Psoas muscle (tissue), 8 donors: ENCODE measurements at regions of chr17 and their contacts with region 1.

Region 1: GRCh38 chr17:65556014-65556909 is 5.2 kb downstream of the AXIN2 start:
- DNase-seq: peak; percentile 81 to 92
- ATAC-seq: peak; percentile 51 to 64 (median 56)
- H3K4me3 ChIP-seq: no peak overlapping the region
- H3K27ac ChIP-seq: no peak overlapping the region
- H3K4me1 ChIP-seq: peaks cover 51% of the 10 kb centered on the region
- H3K27me3 ChIP-seq: no peaks in the 10 kb centered on the region
- CTCF ChIP-seq: peak; percentile 81

Region 2: DNA sequence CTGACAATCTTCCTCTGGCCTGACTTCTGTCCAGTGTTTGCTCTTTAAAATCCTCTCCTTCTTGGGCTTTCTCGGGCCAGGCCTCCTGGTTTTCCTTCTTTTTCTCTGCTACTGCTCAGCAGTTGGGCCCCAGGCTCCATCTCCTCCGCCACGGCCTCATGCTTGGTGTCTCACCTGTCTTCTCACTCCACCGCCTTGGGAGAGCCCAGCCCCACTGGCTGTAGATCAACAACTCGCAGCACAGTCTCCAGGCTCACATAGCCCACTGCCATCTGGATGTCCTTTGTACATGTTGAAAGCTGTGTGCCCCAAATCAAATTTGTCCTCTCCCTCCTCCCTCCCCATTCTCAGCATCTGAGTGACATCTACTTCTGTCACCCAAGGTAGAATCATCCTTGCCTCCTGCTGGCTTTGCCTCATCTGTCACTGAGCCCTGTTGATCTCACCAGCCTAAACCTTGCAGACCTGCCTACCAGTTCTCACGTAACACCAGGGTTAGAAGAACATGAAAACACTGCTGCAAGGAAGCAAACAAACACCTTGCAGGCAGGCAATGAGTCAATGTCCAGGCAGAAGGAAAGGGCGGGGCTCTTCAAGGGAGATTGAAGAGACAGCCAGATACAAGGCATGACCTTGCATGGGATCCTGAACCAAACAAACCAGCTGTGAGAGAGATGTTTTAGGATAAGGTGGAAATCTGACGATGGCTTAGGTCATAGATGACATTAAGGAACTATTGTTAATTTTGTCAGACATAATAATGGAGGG is 790.9 kb before region 1 on chr17:
- intact Hi-C with region 1: no loop called
- DNase-seq: no peak
- ATAC-seq: no peak
- H3K4me3 ChIP-seq: no peak overlapping the region
- H3K27ac ChIP-seq: no peak overlapping the region
- H3K4me1 ChIP-seq: no peaks in the 10 kb centered on the region
- H3K27me3 ChIP-seq: no peaks in the 10 kb centered on the region
- CTCF ChIP-seq: no peak

Region 3: GRCh38 chr17:65294179-65294720 is 262.0 kb before region 1 on chr17:
- intact Hi-C with region 1: loop called (anchors 5 kb)
- DNase-seq: peak; percentile 34 to 70
- ATAC-seq: peak; percentile 83 to 96 (median 90)
- H3K4me3 ChIP-seq: no peak overlapping the region
- H3K27ac ChIP-seq: no peak overlapping the region
- H3K4me1 ChIP-seq: peaks cover 3% of the 10 kb centered on the region
- H3K27me3 ChIP-seq: no peaks in the 10 kb centered on the region
- CTCF ChIP-seq: peak; percentile 72

Region 4: DNA sequence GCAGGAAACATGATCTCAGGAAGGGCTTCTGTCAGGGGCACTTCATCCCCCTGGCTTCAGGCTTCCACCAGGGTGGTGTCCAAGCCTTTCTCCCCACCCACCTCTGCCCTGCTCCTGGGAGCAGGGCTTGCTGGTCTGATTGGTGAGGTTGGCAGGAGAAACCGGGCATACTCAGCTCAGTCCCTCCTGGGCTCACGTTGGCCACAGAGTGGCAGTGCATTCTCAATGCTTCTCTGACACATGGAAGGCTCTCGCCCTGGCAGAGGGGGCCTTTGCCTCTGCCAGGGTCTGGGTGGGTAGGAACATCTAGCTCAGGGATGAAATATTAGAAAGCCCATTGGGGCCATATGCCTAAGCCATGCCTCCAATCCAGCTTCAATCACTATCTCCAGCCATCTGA is 137.6 kb before region 1 on chr17:
- intact Hi-C with region 1: loop called in 1 of 2 experiments (anchors 2 kb)
- DNase-seq: peak in 1 of 2 donors; percentile 55
- ATAC-seq: peak; percentile 65 to 84 (median 78)
- H3K4me3 ChIP-seq: no peak overlapping the region
- H3K27ac ChIP-seq: no peak overlapping the region
- H3K4me1 ChIP-seq: peaks cover 9% of the 10 kb centered on the region
- H3K27me3 ChIP-seq: no peaks in the 10 kb centered on the region
- CTCF ChIP-seq: peak; percentile 34

Region 5: DNA sequence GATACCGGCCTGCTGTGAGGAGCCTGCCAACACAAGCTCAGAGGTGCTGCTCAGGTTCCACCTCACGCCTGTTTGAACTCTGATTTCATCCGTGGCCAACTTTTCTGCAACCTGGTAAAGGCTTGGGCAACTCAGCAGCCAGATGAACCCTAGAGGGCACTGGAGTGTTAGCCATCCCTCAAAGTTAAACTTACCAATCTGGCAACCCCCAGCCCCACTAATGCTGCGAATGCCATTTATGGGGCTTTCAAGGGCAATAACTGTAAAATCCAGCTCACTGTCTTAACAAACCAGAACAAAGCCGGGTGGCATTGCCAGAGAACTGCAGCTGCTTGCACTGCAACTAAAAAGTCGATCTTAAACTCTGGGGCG is 100.3 kb before region 1 on chr17:
- intact Hi-C with region 1: loop called (anchors 2 kb)
- DNase-seq: peak in 1 of 2 donors; percentile 64
- ATAC-seq: peak; percentile 82 to 90 (median 86)
- H3K4me3 ChIP-seq: peak overlapping the region; percentile 31
- H3K27ac ChIP-seq: peak overlapping the region; percentile 62
- H3K4me1 ChIP-seq: peaks cover 28% of the 10 kb centered on the region
- H3K27me3 ChIP-seq: no peaks in the 10 kb centered on the region
- CTCF ChIP-seq: peak; percentile 42

Region 6: DNA sequence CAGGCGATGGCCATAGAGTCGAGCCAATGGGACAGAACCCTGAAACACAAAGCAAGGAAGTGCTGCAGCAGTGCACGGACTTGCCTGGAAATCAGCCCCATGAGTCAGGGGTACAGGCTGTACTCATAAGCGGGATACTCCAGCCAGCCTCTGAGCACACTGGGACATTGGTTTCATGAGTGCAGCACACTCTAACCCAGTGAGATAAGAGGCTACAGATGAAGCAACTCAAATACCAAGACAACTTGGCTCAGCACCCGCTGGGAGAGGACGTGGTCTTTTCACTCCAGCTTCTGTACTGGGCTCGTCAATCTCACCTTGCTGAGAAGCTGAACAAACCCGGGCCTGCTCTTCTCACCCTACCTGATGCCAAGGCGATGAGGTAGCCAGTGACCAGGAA is 93.0 kb before region 1 on chr17:
- intact Hi-C with region 1: loop called in 1 of 2 experiments (anchors 2 kb)
- DNase-seq: peak; percentile 73 to 90
- ATAC-seq: peak; percentile 95 to 98 (median 96)
- H3K4me3 ChIP-seq: no peak overlapping the region
- H3K27ac ChIP-seq: peak overlapping the region; percentile 81
- H3K4me1 ChIP-seq: peaks cover 28% of the 10 kb centered on the region
- H3K27me3 ChIP-seq: no peaks in the 10 kb centered on the region
- CTCF ChIP-seq: no peak

Region 7: GRCh38 chr17:65472415-65473309 is 83.6 kb before region 1 on chr17:
- intact Hi-C with region 1: loop called (anchors 2 to 5 kb)
- DNase-seq: peak; percentile 66 to 85
- ATAC-seq: peak; percentile 91 to 95 (median 94)
- H3K4me3 ChIP-seq: peak overlapping the region; percentile 13
- H3K27ac ChIP-seq: peak overlapping the region; percentile 73
- H3K4me1 ChIP-seq: peaks cover 17% of the 10 kb centered on the region
- H3K27me3 ChIP-seq: no peaks in the 10 kb centered on the region
- CTCF ChIP-seq: no peak